HCT116 (cell line): ENCODE measurements at regions of chr11 and their contacts with region 1.

Region 1: DNA sequence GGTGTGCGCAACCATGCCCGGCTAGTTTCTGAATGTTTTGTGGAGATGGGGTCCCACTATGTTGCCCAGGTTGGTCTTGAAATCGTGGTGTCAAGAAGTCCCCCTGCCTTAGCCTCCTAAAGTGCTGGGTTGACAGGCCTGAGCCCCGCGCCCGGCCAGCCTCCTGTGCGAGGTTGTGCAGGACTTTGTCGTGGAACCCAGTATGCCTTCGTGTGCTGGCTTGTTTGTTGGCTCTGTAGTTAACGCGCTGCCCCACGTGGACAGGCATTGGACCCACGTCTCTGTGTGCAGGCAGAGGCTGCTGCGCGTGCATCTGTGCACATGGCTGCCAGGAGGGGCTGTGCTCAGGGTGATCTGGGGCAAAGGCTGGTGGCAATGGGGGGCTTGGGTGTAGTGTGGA is 33.9 kb upstream of the ZNF195 start:
- DNase-seq: no peak
- ATAC-seq: no peak
- H3K4me3 ChIP-seq: no peak overlapping the region
- H3K27ac ChIP-seq: no peak overlapping the region
- H3K4me1 ChIP-seq: no peaks in the 10 kb centered on the region
- H3K27me3 ChIP-seq: no peaks in the 10 kb centered on the region
- CTCF ChIP-seq: no peak
- POLR2A ChIP-seq: no peak
- RAD21 ChIP-seq: no peak

Region 2: GRCh38 chr11:3109921-3110706 is 302.7 kb before region 1 on chr11:
- CTCF ChIA-PET with region 1: no interaction called
- POLR2A ChIA-PET with region 1: no interaction called
- RAD21 ChIA-PET with region 1: no interaction called
- intact Hi-C with region 1: loop called (anchors 2 kb)
- DNase-seq: peak; percentile 37
- ATAC-seq: peak; percentile 95
- H3K4me3 ChIP-seq: no peak overlapping the region
- H3K27ac ChIP-seq: no peak overlapping the region
- H3K4me1 ChIP-seq: no peaks in the 10 kb centered on the region
- H3K27me3 ChIP-seq: no peaks in the 10 kb centered on the region
- CTCF ChIP-seq: peak; percentile 74 to 88 (median 79)
- POLR2A ChIP-seq: no peak
- RAD21 ChIP-seq: peak; percentile 86

Region 3: DNA sequence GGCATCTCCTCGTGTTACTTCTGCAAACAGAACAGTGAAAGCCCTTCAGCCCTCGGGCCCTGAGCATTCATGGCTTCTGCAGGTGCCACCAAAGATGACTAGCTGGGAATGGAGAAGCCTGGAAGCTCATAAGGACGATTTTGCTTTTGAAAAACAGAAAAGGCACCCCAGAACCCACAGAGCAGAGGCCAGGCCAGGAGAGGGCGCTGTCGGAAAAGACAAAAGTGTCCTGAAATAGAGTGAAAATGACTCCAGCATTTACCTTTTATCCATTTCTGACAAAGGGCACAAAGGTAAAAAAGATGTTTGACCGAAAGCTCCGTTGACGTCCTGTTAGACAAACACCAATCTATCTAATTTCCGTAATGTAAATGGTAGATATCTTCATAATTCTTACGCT is 71.5 kb before region 1 on chr11:
- CTCF ChIA-PET with region 1: interaction called, 13 read pairs
- POLR2A ChIA-PET with region 1: no interaction called
- RAD21 ChIA-PET with region 1: no interaction called
- intact Hi-C with region 1: loop called (anchors 1 kb)
- DNase-seq: peak; percentile 18
- ATAC-seq: peak; percentile 55; the same call in 1 of the 2 replicates
- H3K4me3 ChIP-seq: no peak overlapping the region
- H3K27ac ChIP-seq: no peak overlapping the region
- H3K4me1 ChIP-seq: peaks cover 0 to 14% of the 10 kb centered on the region in 2 experiments; a peak in 1 of 4 replicates
- H3K27me3 ChIP-seq: no peaks in the 10 kb centered on the region
- CTCF ChIP-seq: peak; percentile 75 to 95 (median 84)
- POLR2A ChIP-seq: no peak
- RAD21 ChIP-seq: peak; percentile 80

Region 4: GRCh38 chr11:3378426-3379423 is 34.1 kb before region 1 on chr11 and contains the start of gene ZNF195:
- CTCF ChIA-PET with region 1: interaction called, 10 read pairs
- POLR2A ChIA-PET with region 1: no interaction called
- RAD21 ChIA-PET with region 1: no interaction called
- intact Hi-C with region 1: no loop called
- DNase-seq: peak; percentile 97
- ATAC-seq: peak; percentile 99
- H3K4me3 ChIP-seq: peak within 1 kb of the TSS; percentile 78 to 98
- H3K27ac ChIP-seq: peak within 1 kb of the TSS; percentile 71
- H3K4me1 ChIP-seq: peaks cover 3 to 21% of the 10 kb centered on the region in 2 experiments; a peak in 2 of 4 replicates
- H3K27me3 ChIP-seq: no peaks in the 10 kb centered on the region
- CTCF ChIP-seq: no peak
- POLR2A ChIP-seq: peak; percentile 79
- RAD21 ChIP-seq: no peak
- total RNA-seq, gene ZNF195: 47.7 TPM

Region 5: DNA sequence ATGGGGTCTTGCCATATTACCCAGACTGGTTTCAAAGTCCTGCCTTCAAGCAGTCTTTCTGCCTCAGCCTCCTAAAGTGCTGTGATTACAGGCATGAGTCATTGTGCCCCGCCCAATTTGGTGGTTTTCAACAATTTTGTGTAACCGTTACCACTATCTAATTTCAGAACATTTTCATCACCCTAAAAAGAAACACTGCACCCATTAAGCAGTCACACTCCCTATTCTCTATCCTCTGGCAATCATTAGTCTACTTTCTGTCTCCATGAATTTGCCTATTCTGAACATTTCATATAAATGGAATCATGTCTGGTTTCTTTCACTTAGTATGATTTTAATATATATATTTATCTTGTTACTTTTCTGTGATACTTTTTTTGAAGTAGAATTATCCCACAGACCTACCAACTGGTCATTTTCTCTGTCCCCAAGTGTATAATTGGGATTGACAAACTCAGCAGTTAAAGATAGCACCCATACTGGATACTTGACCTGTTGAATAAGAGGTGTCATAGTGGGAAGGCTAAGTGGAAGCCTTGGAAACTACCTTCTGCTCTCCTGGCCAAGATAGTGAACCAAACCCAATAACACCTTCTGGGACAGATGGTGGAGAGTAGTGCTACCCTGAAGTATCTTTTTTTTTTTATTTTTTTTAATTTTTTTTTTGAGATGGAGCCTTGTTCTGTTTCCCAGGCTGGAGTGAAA is 507.5 kb after region 1 on chr11:
- CTCF ChIA-PET with region 1: no interaction called
- POLR2A ChIA-PET with region 1: no interaction called
- RAD21 ChIA-PET with region 1: no interaction called
- intact Hi-C with region 1: no loop called
- DNase-seq: peak; percentile 44
- ATAC-seq: peak; percentile 64
- H3K4me3 ChIP-seq: no peak overlapping the region
- H3K27ac ChIP-seq: no peak overlapping the region
- H3K4me1 ChIP-seq: peaks cover 8 to 17% of the 10 kb centered on the region in 2 experiments
- H3K27me3 ChIP-seq: no peaks in the 10 kb centered on the region
- CTCF ChIP-seq: no peak
- POLR2A ChIP-seq: no peak
- RAD21 ChIP-seq: no peak